Transverse colon (tissue), 4 donors: ENCODE measurements at regions of chr21 and their contacts with region 1.

Region 1: GRCh38 chr21:34912159-34912945 is 136.8 kb downstream of the RUNX1 start:
- DNase-seq: no peak
- H3K4me3 ChIP-seq: no peak overlapping the region
- H3K27ac ChIP-seq: no peak overlapping the region
- H3K4me1 ChIP-seq: peaks cover 0 to 30% (median 7%) of the 10 kb centered on the region in 4 donors
- H3K27me3 ChIP-seq: no peaks in the 10 kb centered on the region
- CTCF ChIP-seq: no peak
- EP300 ChIP-seq: no peak
- POLR2A ChIP-seq: no peak

Region 2: GRCh38 chr21:34857874-34858273 is 54.5 kb before region 1 on chr21:
- in situ Hi-C with region 1: no loop called
- intact Hi-C with region 1: no loop called
- DNase-seq: no peak
- H3K4me3 ChIP-seq: no peak overlapping the region
- H3K27ac ChIP-seq: peak overlapping the region in 2 of 4 donors; percentile 7 to 38
- H3K4me1 ChIP-seq: peaks cover 0 to 14% (median 3%) of the 10 kb centered on the region in 4 donors
- H3K27me3 ChIP-seq: no peaks in the 10 kb centered on the region
- CTCF ChIP-seq: no peak
- EP300 ChIP-seq: no peak
- POLR2A ChIP-seq: no peak

Region 3: GRCh38 chr21:34959607-34960006 is 47.3 kb after region 1 on chr21:
- in situ Hi-C with region 1: no loop called
- intact Hi-C with region 1: loop called (anchors 1 kb)
- DNase-seq: no peak
- H3K4me3 ChIP-seq: no peak overlapping the region
- H3K27ac ChIP-seq: no peak overlapping the region
- H3K4me1 ChIP-seq: no peaks in the 10 kb centered on the region
- H3K27me3 ChIP-seq: no peaks in the 10 kb centered on the region
- CTCF ChIP-seq: no peak
- EP300 ChIP-seq: no peak
- POLR2A ChIP-seq: no peak

Region 4: GRCh38 chr21:35503671-35504070 is 591.3 kb after region 1 on chr21:
- in situ Hi-C with region 1: no loop called
- intact Hi-C with region 1: no loop called
- DNase-seq: no peak
- H3K4me3 ChIP-seq: no peak overlapping the region
- H3K27ac ChIP-seq: peak overlapping the region; percentile 16 to 37 (median 28)
- H3K4me1 ChIP-seq: peaks cover 0 to 21% (median 3%) of the 10 kb centered on the region in 4 donors
- H3K27me3 ChIP-seq: peaks cover 7% of the 10 kb centered on the region
- CTCF ChIP-seq: no peak
- EP300 ChIP-seq: no peak
- POLR2A ChIP-seq: no peak